GM10248 (cell line): ENCODE measurements at regions of chr10 and their contacts with region 1.

Region 1: GRCh38 chr10:119253433-119254174 is 46.2 kb downstream of the GRK5 start:
- DNase-seq: no peak
- CTCF ChIP-seq: no peak

Region 2: DNA sequence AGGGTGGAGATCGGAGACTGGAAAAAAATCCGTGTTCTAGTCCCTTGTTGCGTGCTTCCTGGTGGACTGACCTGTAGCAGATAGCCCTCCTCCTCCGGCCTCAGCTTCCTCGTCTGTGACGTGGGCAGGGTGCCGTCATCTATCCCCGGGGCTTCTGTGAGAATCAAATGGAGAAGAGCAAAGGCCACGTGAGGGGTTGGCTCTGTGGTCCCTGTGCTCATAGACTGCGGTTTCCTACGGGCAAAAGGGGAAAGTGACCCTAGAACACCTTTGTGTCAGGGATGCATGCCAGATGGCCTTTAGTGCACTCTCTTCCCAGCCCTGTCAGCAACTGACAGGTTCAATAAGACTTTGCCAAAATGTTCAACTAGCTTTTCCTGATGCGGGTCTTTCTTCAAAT is 12.5 kb before region 1 on chr10:
- CTCF ChIA-PET with region 1: interaction called, 10 read pairs
- POLR2A ChIA-PET with region 1: no interaction called
- DNase-seq: no peak
- CTCF ChIP-seq: no peak